ENCODE measurements at regions of chr3 and their contacts with region 1.

Region 1: DNA sequence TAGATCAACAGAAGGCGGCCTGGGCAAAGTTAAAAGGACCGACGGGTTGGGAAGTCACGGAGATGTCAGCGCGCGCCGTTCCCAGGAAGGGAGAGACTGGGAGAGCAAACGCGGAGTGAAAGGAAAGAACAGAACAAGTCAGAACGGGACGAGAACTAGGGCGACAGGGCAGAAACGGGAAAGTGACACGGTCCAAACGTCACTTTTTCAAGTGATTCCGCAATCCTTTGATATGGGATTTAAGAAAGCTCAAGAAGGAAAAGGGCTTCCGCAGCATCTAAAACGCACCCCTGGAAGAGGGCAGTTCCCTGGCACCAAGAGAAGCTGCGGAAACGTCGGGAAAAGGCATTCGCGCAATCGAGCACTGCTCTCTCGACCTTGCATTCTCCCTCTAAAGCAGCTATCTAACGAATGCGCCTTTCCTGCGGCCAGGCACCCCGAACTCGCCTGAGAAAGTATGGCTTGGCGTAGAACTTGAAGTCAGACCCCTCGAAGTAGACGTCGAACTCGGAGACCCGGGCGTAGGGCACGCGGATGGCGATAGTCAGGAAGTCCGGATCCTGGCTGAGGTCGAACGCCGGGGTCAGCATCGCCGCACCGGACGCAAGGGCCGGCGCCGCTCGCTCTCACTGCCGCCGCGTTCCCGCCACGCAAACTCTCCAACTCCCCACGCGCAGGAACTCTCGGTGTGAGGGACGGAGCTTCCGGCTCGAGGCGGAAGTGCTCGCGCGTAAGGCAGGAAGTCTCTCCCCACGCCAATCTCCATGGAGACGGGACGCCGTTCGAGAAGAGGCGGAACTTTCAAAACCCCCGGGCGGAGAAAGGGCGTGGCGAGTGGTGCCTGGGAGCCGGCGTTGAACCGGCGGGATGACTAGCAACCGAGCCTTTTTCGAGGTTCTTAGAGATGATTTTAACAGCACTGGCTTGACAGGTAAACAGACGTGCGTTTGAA is at the start of gene SHQ1:
- DNase-seq: peak; percentile 93
- ATAC-seq: peak; percentile 91
- H3K4me3 Mint-ChIP-seq: peak within 1 kb of the TSS; percentile 86
- H3K27ac Mint-ChIP-seq: no peak within 1 kb of the TSS
- H3K4me1 Mint-ChIP-seq: peaks cover 22% of the 10 kb centered on the region
- H3K27me3 Mint-ChIP-seq: peaks cover 32% of the 10 kb centered on the region
- CTCF ChIP-seq: no peak
- total RNA-seq, gene SHQ1: 24.5 to 29.1 TPM (median 27.2 TPM) in 3 replicates

Region 2: GRCh38 chr3:72892081-72892775 is 44.2 kb after region 1 on chr3:
- CTCF ChIA-PET with region 1: interaction called, 22 read pairs
- POLR2A ChIA-PET with region 1: no interaction called
- DNase-seq: no peak
- ATAC-seq: no peak
- H3K4me3 Mint-ChIP-seq: no peak overlapping the region
- H3K27ac Mint-ChIP-seq: no peak overlapping the region
- H3K4me1 Mint-ChIP-seq: peaks cover 28% of the 10 kb centered on the region
- H3K27me3 Mint-ChIP-seq: peaks cover 52% of the 10 kb centered on the region
- CTCF ChIP-seq: no peak

Region 3: GRCh38 chr3:73056014-73056844 is 208.2 kb after region 1 on chr3:
- CTCF ChIA-PET with region 1: interaction called, 14 read pairs
- POLR2A ChIA-PET with region 1: no interaction called
- DNase-seq: no peak
- ATAC-seq: no peak
- H3K4me3 Mint-ChIP-seq: no peak overlapping the region
- H3K27ac Mint-ChIP-seq: peak overlapping the region; percentile 63
- H3K4me1 Mint-ChIP-seq: peaks cover 39% of the 10 kb centered on the region
- H3K27me3 Mint-ChIP-seq: no peaks in the 10 kb centered on the region
- CTCF ChIP-seq: no peak